Endothelial cell of umbilical vein (primary cell): ENCODE measurements at regions of chr10 and their contacts with region 1.

Region 1: GRCh38 chr10:61896854-61897661 is 4.4 kb upstream of the ARID5B start:
- DNase-seq: peak; percentile 59
- H3K4me3 ChIP-seq: peak overlapping the region in 2 of 3 experiments; percentile 4 to 6
- H3K27ac ChIP-seq: no peak overlapping the region
- H3K4me1 ChIP-seq: peaks cover 24% of the 10 kb centered on the region
- H3K27me3 ChIP-seq: no peaks in the 10 kb centered on the region
- CTCF ChIP-seq: peak; percentile 69 to 73
- POLR2A ChIP-seq: no peak

Region 2: GRCh38 chr10:61750929-61751471 is 146.1 kb before region 1 on chr10:
- CTCF ChIA-PET with region 1: interaction called, 49 read pairs
- POLR2A ChIA-PET with region 1: interaction called, 4 read pairs
- dilution Hi-C with region 1: no loop called
- intact Hi-C with region 1: loop called (anchors 1 kb)
- DNase-seq: peak; percentile 58
- H3K4me3 ChIP-seq: no peak overlapping the region
- H3K27ac ChIP-seq: no peak overlapping the region
- H3K4me1 ChIP-seq: peaks cover 18% of the 10 kb centered on the region
- H3K27me3 ChIP-seq: no peaks in the 10 kb centered on the region
- CTCF ChIP-seq: peak; percentile 82 to 86
- POLR2A ChIP-seq: no peak

Region 3: GRCh38 chr10:61882621-61883373 is 14.3 kb before region 1 on chr10:
- CTCF ChIA-PET with region 1: interaction called, 21 read pairs
- POLR2A ChIA-PET with region 1: no interaction called
- dilution Hi-C with region 1: no loop called
- intact Hi-C with region 1: no loop called
- DNase-seq: no peak
- H3K4me3 ChIP-seq: no peak overlapping the region
- H3K27ac ChIP-seq: no peak overlapping the region
- H3K4me1 ChIP-seq: no peaks in the 10 kb centered on the region
- H3K27me3 ChIP-seq: peaks cover 4 to 8% of the 10 kb centered on the region in 2 experiments
- CTCF ChIP-seq: no peak
- POLR2A ChIP-seq: no peak

Region 4: DNA sequence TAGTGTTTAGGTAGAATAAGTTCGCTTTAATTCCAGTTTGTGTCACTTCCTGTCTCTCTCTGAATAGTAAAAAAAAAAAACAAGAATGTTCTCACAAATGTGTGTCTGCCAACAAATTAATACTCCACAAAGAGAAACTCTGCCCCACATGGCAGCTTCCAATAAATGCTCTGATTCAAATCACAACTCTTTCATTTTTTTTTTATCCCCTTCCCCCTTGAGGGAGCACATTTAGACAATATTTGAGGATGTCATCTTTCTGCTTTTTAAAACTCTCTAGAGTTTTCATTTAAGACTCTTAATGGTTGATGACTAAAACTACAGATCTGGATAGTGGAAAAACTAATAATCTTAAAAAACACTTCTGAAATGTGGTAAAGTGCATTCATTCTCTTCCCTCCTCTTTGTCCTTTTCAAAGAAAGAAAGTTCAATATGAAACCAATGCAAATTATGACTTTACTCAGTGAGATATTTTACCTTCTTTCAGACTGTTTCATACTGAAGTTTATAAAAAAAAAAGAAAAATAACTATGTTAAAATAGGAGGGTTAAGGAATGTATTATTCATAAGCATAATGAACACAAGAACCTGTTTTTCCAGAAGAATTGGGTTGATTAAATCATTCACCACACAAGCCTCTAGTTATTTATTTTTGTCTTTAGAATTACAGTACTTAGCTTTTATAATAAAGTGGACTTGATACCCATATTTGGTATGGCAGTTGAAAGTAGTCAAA is 46.8 kb after region 1 on chr10:
- CTCF ChIA-PET with region 1: interaction called, 22 read pairs
- POLR2A ChIA-PET with region 1: no interaction called
- dilution Hi-C with region 1: no loop called
- intact Hi-C with region 1: no loop called
- DNase-seq: peak; percentile 80
- H3K4me3 ChIP-seq: peak overlapping the region in 1 of 3 experiments; percentile 66
- H3K27ac ChIP-seq: peak overlapping the region; percentile 58
- H3K4me1 ChIP-seq: peaks cover 32% of the 10 kb centered on the region
- H3K27me3 ChIP-seq: no peaks in the 10 kb centered on the region
- CTCF ChIP-seq: peak in 1 of 2 donors; percentile 18
- POLR2A ChIP-seq: no peak

Region 5: GRCh38 chr10:62082729-62083411 is 185.8 kb after region 1 on chr10:
- CTCF ChIA-PET with region 1: no interaction called
- POLR2A ChIA-PET with region 1: no interaction called
- dilution Hi-C with region 1: no loop called
- intact Hi-C with region 1: loop called (anchors 2 kb)
- DNase-seq: peak; percentile 94
- H3K4me3 ChIP-seq: peak overlapping the region in 1 of 3 experiments; percentile 43
- H3K27ac ChIP-seq: peak overlapping the region; percentile 100
- H3K4me1 ChIP-seq: peaks cover 37% of the 10 kb centered on the region
- H3K27me3 ChIP-seq: no peaks in the 10 kb centered on the region
- CTCF ChIP-seq: no peak
- POLR2A ChIP-seq: peak; percentile 60